AG04450 (cell line): ENCODE measurements at regions of chr14 and their contacts with region 1.

Region 1: DNA sequence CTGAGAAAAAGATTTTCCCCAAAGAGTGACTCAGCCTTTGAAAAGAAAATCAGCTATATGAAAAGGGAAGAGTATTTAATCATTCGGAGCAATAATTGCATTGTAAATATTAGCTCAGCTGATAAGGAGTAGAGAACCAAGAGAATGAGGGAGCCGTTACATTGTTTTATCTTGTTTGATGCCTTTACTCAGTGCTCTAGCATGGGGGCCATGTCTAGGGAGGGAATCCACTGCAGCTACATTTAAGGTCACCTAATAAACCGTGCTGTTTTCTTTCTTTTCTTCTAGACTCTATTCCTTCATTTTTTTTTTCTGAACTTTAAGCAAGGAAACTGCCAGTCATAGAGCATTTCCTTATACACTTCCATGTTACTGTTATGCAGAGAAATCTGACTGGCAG is 447.0 kb downstream of the DIO2 start:
- DNase-seq: no peak
- H3K4me3 ChIP-seq: no peak overlapping the region
- H3K27ac ChIP-seq: no peak overlapping the region
- H3K27me3 ChIP-seq: no peaks in the 10 kb centered on the region
- CTCF ChIP-seq: no peak

Region 2: GRCh38 chr14:79781882-79782281 is 17.6 kb after region 1 on chr14:
- CTCF ChIA-PET with region 1: interaction called, 11 read pairs
- POLR2A ChIA-PET with region 1: no interaction called
- DNase-seq: no peak
- H3K4me3 ChIP-seq: no peak overlapping the region
- H3K27ac ChIP-seq: no peak overlapping the region
- H3K27me3 ChIP-seq: peaks cover 4% of the 10 kb centered on the region
- CTCF ChIP-seq: no peak

Region 3: DNA sequence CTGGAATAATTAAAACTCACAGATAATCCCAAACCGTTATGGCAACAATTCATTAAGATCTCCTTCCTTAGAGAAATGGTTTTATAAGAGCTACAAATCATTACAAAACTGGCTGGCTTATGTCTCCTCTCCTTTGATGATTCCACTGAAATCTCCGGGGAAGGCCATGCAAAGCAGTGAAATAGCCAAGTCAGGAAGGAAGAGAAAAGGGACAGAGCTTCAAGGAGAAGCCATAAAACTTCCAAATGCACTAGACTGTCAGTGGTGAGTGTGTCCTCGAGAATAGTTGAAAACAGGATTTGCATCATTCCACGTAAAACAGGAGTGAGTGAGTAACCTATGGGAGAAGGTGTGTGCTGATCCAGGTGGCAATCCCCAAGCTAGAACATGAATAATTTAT is 117.0 kb after region 1 on chr14:
- CTCF ChIA-PET with region 1: no interaction called
- POLR2A ChIA-PET with region 1: no interaction called
- DNase-seq: no peak
- H3K4me3 ChIP-seq: no peak overlapping the region
- H3K27ac ChIP-seq: no peak overlapping the region
- H3K27me3 ChIP-seq: no peaks in the 10 kb centered on the region
- CTCF ChIP-seq: no peak